IMR-90 (cell line): ENCODE measurements at regions of chr6 and their contacts with region 1.

Region 1: DNA sequence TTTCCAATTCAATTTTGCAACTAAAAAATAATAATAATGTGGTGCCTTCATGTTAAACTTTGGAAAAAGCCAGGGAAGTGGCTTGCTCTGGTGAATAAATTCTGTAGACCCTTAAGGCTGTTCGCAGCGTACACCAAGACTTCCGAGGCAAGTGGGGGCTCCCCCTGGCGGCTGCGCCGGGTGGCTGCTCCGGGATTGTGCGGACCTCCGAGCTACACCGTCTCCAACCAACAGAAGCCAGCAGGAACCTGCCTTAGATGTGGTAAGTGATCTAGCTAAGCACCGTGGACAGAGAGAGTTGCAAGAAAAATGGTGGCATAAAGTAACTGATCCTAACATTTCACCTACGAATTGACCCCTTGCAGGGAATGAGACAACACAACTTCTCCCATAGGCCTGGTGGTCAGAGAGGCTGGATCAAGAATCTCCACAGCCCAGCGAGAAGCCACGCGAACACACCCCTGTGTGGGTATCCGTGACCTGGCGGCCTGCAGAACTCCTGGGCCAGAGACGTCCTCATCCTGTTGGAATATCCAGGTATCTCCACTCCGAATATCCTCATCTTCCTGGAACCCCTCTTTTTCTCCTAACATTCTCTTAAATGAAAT is 69.6 kb downstream of the TBXT start:
- DNase-seq: peak; percentile 82
- ATAC-seq: peak; percentile 99
- H3K4me3 ChIP-seq: peak overlapping the region; percentile 35
- H3K27ac ChIP-seq: peak overlapping the region; percentile 21; the same call in 1 of the 2 replicates
- H3K4me1 ChIP-seq: peaks cover 2% of the 10 kb centered on the region; the same call in 1 of the 2 replicates
- H3K27me3 ChIP-seq: peaks cover 5% of the 10 kb centered on the region
- CTCF ChIP-seq: peak; percentile 95
- POLR2A ChIP-seq: no peak
- RAD21 ChIP-seq: peak; percentile 95

Region 2: DNA sequence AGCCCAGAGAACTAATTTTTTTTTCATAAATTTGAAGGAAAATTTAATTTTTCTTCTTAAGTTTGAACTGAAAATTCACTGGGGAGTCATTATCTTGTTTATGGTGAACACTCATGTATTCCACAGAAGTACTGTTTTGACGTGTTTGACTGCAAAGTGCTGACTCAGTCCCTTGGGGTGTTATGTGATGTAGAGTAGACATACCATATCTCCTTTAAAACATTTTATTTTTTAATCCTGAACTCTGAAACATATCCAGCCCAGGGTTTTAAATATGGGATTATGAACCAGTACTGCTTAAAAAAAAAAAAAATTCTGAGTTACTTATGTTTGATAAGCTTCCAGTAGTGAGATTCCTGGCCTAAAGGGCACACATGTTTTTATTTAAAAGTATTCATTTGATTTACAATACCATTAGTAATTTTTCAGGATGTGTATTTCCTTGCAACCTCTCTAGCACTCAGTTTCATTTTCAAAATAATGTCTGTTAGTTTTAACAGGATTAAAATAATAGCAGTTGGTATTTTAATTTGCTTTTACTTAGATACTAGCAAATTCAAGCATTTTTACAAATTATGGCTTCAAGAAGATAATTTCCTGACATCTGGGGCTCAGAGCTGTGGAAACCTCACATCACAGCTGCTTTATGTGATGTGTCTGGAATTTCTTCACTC is 353.3 kb before region 1 on chr6:
- CTCF ChIA-PET with region 1: no interaction called
- POLR2A ChIA-PET with region 1: no interaction called
- dilution Hi-C with region 1: no loop called
- in situ Hi-C with region 1: no loop called
- intact Hi-C with region 1: no loop called
- DNase-seq: peak; percentile 41
- ATAC-seq: peak; percentile 60
- H3K4me3 ChIP-seq: no peak overlapping the region
- H3K27ac ChIP-seq: no peak overlapping the region
- H3K4me1 ChIP-seq: peaks cover 4% of the 10 kb centered on the region; the same call in 1 of the 2 replicates
- H3K27me3 ChIP-seq: peaks cover 7% of the 10 kb centered on the region
- CTCF ChIP-seq: no peak
- POLR2A ChIP-seq: no peak
- RAD21 ChIP-seq: no peak

Region 3: GRCh38 chr6:165884813-165885765 is 212.9 kb before region 1 on chr6:
- CTCF ChIA-PET with region 1: interaction called, 35 read pairs
- POLR2A ChIA-PET with region 1: no interaction called
- dilution Hi-C with region 1: loop called (anchors 25 kb)
- in situ Hi-C with region 1: no loop called
- intact Hi-C with region 1: loop called (anchors 1 kb)
- DNase-seq: peak; percentile 68
- ATAC-seq: peak; percentile 96
- H3K4me3 ChIP-seq: no peak overlapping the region
- H3K27ac ChIP-seq: no peak overlapping the region
- H3K4me1 ChIP-seq: peaks cover 7% of the 10 kb centered on the region
- H3K27me3 ChIP-seq: no peaks in the 10 kb centered on the region
- CTCF ChIP-seq: peak; percentile 95
- POLR2A ChIP-seq: peak; percentile 46; the same call in 1 of the 2 replicates
- RAD21 ChIP-seq: peak; percentile 95

Region 4: GRCh38 chr6:165895421-165896165 is 202.4 kb before region 1 on chr6:
- CTCF ChIA-PET with region 1: interaction called, 35 read pairs
- POLR2A ChIA-PET with region 1: no interaction called
- dilution Hi-C with region 1: loop called (anchors 25 kb)
- in situ Hi-C with region 1: loop called (anchors 5 kb)
- intact Hi-C with region 1: loop called (anchors 1 kb)
- DNase-seq: no peak
- ATAC-seq: peak; percentile 44; the same call in 1 of the 2 replicates
- H3K4me3 ChIP-seq: no peak overlapping the region
- H3K27ac ChIP-seq: no peak overlapping the region
- H3K4me1 ChIP-seq: no peaks in the 10 kb centered on the region
- H3K27me3 ChIP-seq: no peaks in the 10 kb centered on the region
- CTCF ChIP-seq: no peak
- POLR2A ChIP-seq: no peak
- RAD21 ChIP-seq: no peak

Region 5: DNA sequence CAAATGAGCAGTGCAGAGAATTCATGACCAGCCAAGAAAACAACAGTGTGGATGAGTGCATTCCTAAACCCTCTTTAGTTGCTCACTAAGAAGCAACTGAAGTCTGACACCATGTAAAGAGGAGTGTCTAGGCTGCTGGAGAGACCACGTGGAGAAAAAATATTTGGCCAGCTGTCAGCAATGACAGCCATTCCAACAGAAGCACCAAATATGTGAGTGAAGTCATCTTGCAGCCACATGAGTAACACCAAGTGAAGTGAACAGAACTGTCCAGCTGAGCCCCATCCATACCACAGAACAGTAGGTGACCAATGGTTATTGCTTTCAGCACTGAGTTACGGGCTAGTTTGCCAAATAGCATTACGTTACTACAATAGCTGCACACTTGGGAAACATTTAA is 19.7 kb before region 1 on chr6:
- CTCF ChIA-PET with region 1: interaction called, 4 read pairs
- POLR2A ChIA-PET with region 1: no interaction called
- dilution Hi-C with region 1: no loop called
- in situ Hi-C with region 1: no loop called
- intact Hi-C with region 1: loop called (anchors 2 kb)
- DNase-seq: peak; percentile 96
- ATAC-seq: peak; percentile 98
- H3K4me3 ChIP-seq: no peak overlapping the region
- H3K27ac ChIP-seq: no peak overlapping the region
- H3K4me1 ChIP-seq: peaks cover 1% of the 10 kb centered on the region; the same call in 1 of the 2 replicates
- H3K27me3 ChIP-seq: peaks cover 4% of the 10 kb centered on the region; the same call in 1 of the 2 replicates
- CTCF ChIP-seq: no peak
- POLR2A ChIP-seq: no peak; the same call in 1 of the 2 replicates
- RAD21 ChIP-seq: no peak

Region 6: DNA sequence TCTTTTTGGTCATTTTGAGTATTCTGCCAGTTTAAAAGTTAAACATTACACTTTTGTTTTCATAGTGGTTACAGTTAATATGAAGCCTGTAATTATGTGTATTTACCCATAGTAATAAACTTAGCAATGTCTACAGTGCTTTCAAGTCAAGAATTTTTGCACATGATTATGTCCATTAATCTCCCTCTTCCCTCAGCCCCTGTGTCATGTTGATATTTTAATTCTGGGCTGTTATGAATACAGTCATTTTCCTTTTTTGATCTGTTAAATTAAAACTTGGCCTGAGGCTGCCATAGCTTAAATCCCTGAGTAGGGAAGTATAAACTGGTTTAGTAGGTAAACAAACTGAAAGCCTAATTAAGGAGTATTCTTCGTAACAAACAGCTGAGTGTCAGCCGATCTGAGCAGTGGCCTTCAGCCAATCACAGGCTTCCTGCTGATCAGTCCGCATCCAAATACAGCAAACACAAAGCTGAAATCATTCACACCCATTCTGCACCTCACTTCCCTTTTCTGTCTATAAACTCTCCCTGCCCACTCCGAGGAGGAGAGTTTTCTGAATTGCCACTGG is 253.8 kb after region 1 on chr6:
- CTCF ChIA-PET with region 1: no interaction called
- POLR2A ChIA-PET with region 1: no interaction called
- dilution Hi-C with region 1: no loop called
- in situ Hi-C with region 1: no loop called
- intact Hi-C with region 1: no loop called
- DNase-seq: no peak
- ATAC-seq: peak; percentile 51
- H3K4me3 ChIP-seq: no peak overlapping the region
- H3K27ac ChIP-seq: no peak overlapping the region
- H3K4me1 ChIP-seq: peaks cover 2% of the 10 kb centered on the region; the same call in 1 of the 2 replicates
- H3K27me3 ChIP-seq: peaks cover 19% of the 10 kb centered on the region
- CTCF ChIP-seq: no peak
- POLR2A ChIP-seq: no peak
- RAD21 ChIP-seq: no peak